PC-9 (cell line): ENCODE measurements at regions of chr3 and their contacts with region 1.

Region 1: GRCh38 chr3:157130467-157131251 is 29.3 kb downstream of the CCNL1 start:
- DNase-seq: peak; percentile 92 to 98
- H3K4me3 ChIP-seq: peak overlapping the region; percentile 43; the same call in 1 of the 2 replicates
- H3K27ac ChIP-seq: peak overlapping the region; percentile 94
- H3K4me1 ChIP-seq: peaks cover 77% of the 10 kb centered on the region
- H3K27me3 ChIP-seq: no peaks in the 10 kb centered on the region
- CTCF ChIP-seq: peak; percentile 94

Region 2: GRCh38 chr3:156151824-156152428 is 978.7 kb before region 1 on chr3:
- CTCF ChIA-PET with region 1: interaction called, 5 read pairs
- POLR2A ChIA-PET with region 1: no interaction called
- intact Hi-C with region 1: loop called (anchors 1 kb)
- DNase-seq: peak; percentile 49 to 62
- H3K4me3 ChIP-seq: no peak overlapping the region
- H3K27ac ChIP-seq: no peak overlapping the region
- H3K4me1 ChIP-seq: no peaks in the 10 kb centered on the region
- H3K27me3 ChIP-seq: no peaks in the 10 kb centered on the region
- CTCF ChIP-seq: peak; percentile 92

Region 3: GRCh38 chr3:156535162-156535627 is 595.5 kb before region 1 on chr3:
- CTCF ChIA-PET with region 1: interaction called, 4 read pairs
- POLR2A ChIA-PET with region 1: no interaction called
- intact Hi-C with region 1: loop called (anchors 1 kb)
- DNase-seq: peak; percentile 70 to 98
- H3K4me3 ChIP-seq: no peak overlapping the region
- H3K27ac ChIP-seq: peak overlapping the region; percentile 72
- H3K4me1 ChIP-seq: peaks cover 21% of the 10 kb centered on the region
- H3K27me3 ChIP-seq: no peaks in the 10 kb centered on the region
- CTCF ChIP-seq: peak; percentile 59

Region 4: GRCh38 chr3:156630081-156630772 is 500.4 kb before region 1 on chr3:
- CTCF ChIA-PET with region 1: no interaction called
- POLR2A ChIA-PET with region 1: interaction called, 3 read pairs
- intact Hi-C with region 1: loop called (anchors 2 kb)
- DNase-seq: peak; percentile 53 to 93
- H3K4me3 ChIP-seq: no peak overlapping the region
- H3K27ac ChIP-seq: peak overlapping the region; percentile 84
- H3K4me1 ChIP-seq: peaks cover 67% of the 10 kb centered on the region
- H3K27me3 ChIP-seq: no peaks in the 10 kb centered on the region
- CTCF ChIP-seq: no peak

Region 5: DNA sequence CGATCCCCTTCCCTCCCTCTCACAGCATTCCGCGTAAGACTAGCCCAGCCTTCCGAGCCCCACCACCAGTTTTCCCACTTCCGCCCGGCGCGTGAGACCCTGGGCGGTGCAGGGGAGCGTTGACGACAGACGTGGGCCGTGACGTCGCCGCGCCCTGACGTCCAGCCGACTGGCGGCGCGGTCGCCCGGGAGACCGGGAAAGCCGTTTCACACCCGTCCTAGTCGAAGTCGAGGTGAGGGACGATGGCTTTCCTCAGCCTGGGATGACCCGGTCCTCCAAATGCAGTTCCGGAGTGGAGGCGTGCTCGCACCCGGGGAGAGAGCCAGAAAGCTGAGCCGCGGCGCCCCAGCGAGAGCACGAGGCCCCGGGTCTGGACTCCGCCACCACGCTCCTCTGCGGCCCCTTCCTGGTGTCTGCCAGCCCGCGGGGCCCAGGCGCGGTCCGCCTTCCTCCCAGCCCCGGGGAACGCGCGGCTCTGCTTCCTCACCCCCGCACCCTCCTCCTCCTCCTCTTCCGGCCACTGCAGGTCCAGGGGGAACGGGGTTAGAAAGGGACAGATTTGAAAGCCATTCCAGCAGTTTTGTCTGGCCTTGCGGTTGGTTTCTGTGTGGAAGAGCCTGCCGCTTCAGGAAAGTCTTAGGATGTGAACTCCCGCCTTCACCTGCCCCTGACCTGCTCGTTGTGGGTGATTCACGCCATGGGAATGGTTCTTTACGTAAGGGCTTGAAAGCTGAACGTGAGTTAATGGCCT is 304.3 kb before region 1 on chr3 and contains the start of gene LEKR1:
- CTCF ChIA-PET with region 1: no interaction called
- POLR2A ChIA-PET with region 1: no interaction called
- intact Hi-C with region 1: loop called (anchors 1 kb)
- DNase-seq: peak; percentile 91 to 98
- H3K4me3 ChIP-seq: peak within 1 kb of the TSS; percentile 63
- H3K27ac ChIP-seq: peak within 1 kb of the TSS; percentile 100
- H3K4me1 ChIP-seq: peaks cover 26% of the 10 kb centered on the region
- H3K27me3 ChIP-seq: no peaks in the 10 kb centered on the region
- CTCF ChIP-seq: no peak; the same call in 1 of the 2 replicates
- total RNA-seq, gene LEKR1: 3.2 and 3.9 TPM in 2 replicates

Region 6: GRCh38 chr3:157081681-157082210 is 48.9 kb before region 1 on chr3:
- CTCF ChIA-PET with region 1: interaction called, 4 read pairs
- POLR2A ChIA-PET with region 1: no interaction called
- intact Hi-C with region 1: loop called (anchors 1 kb)
- DNase-seq: peak; percentile 95 to 98
- H3K4me3 ChIP-seq: peak overlapping the region; percentile 9; the same call in 1 of the 2 replicates
- H3K27ac ChIP-seq: peak overlapping the region; percentile 92
- H3K4me1 ChIP-seq: peaks cover 49% of the 10 kb centered on the region
- H3K27me3 ChIP-seq: no peaks in the 10 kb centered on the region
- CTCF ChIP-seq: peak; percentile 100